MCF 10A (cell line): ENCODE measurements at regions of chr1 and their contacts with region 1.

Region 1: DNA sequence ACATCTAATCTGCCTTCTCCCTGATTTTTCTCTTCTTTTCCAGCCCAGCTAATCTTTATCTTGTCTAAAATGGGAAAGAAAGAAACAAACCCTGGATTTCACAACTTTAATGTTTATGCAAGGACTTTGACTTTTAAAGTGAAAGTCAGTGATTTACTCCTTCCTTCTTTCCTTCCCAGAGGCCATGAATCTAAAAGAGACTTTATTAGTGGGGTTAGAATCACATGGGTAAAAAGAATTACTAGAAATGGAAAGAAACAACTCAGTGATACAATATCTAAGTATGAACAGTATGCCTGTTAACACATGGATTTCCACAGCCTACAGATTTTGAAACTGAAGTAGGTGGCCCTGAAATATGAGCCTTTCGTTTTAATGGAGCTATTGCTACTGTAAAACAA is 59.8 kb upstream of the KCNK2 start:
- DNase-seq: peak; percentile 76
- H3K4me3 Mint-ChIP-seq: peak overlapping the region; percentile 56
- H3K27ac Mint-ChIP-seq: peak overlapping the region; percentile 97
- H3K4me1 Mint-ChIP-seq: peaks cover 40% of the 10 kb centered on the region
- H3K27me3 Mint-ChIP-seq: no peaks in the 10 kb centered on the region
- CTCF ChIP-seq: no peak

Region 2: GRCh38 chr1:214416417-214416816 is 606.3 kb before region 1 on chr1:
- CTCF ChIA-PET with region 1: no interaction called
- POLR2A ChIA-PET with region 1: no interaction called
- intact Hi-C with region 1: no loop called
- DNase-seq: peak; percentile 80
- H3K4me3 Mint-ChIP-seq: no peak overlapping the region
- H3K27ac Mint-ChIP-seq: peak overlapping the region; percentile 69
- H3K4me1 Mint-ChIP-seq: peaks cover 67% of the 10 kb centered on the region
- H3K27me3 Mint-ChIP-seq: no peaks in the 10 kb centered on the region
- CTCF ChIP-seq: no peak

Region 3: DNA sequence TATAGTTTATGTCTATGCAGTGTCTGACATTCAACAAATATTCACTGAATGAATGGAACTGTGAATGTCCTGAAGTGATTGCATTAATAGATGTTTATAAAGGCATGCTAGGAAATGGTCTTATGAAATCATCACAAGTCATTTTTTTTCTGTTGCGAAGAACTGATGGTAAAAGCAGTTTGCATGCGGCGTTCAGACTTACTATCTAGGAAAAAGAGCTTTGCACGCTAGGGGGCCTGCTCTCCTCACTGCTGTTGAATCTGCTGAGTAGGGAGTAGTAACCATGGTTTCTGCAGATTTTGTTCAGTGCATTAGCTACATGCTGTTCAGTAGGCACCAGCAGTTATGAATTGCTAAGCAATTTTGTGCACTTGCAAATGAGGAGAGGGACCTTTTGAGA is 361.9 kb before region 1 on chr1:
- CTCF ChIA-PET with region 1: interaction called, 14 read pairs
- POLR2A ChIA-PET with region 1: interaction called, 3 read pairs
- intact Hi-C with region 1: no loop called
- DNase-seq: peak; percentile 42
- H3K4me3 Mint-ChIP-seq: no peak overlapping the region
- H3K27ac Mint-ChIP-seq: no peak overlapping the region
- H3K4me1 Mint-ChIP-seq: peaks cover 13% of the 10 kb centered on the region
- H3K27me3 Mint-ChIP-seq: no peaks in the 10 kb centered on the region
- CTCF ChIP-seq: peak; percentile 82

Region 4: GRCh38 chr1:214901718-214902117 is 121.0 kb before region 1 on chr1:
- CTCF ChIA-PET with region 1: interaction called, 5 read pairs
- POLR2A ChIA-PET with region 1: interaction called, 25 read pairs
- intact Hi-C with region 1: no loop called
- DNase-seq: peak; percentile 83
- H3K4me3 Mint-ChIP-seq: peak overlapping the region; percentile 13
- H3K27ac Mint-ChIP-seq: peak overlapping the region; percentile 88
- H3K4me1 Mint-ChIP-seq: peaks cover 36% of the 10 kb centered on the region
- H3K27me3 Mint-ChIP-seq: no peaks in the 10 kb centered on the region
- CTCF ChIP-seq: no peak

Region 5: GRCh38 chr1:215001419-215002021 is 21.2 kb before region 1 on chr1:
- CTCF ChIA-PET with region 1: interaction called, 7 read pairs
- POLR2A ChIA-PET with region 1: interaction called, 59 read pairs
- intact Hi-C with region 1: no loop called
- DNase-seq: peak; percentile 79
- H3K4me3 Mint-ChIP-seq: peak overlapping the region; percentile 1
- H3K27ac Mint-ChIP-seq: peak overlapping the region; percentile 87
- H3K4me1 Mint-ChIP-seq: peaks cover 41% of the 10 kb centered on the region
- H3K27me3 Mint-ChIP-seq: no peaks in the 10 kb centered on the region
- CTCF ChIP-seq: no peak

Region 6: GRCh38 chr1:215082532-215083382 is 60.0 kb after region 1 on chr1 and contains the start of gene KCNK2:
- CTCF ChIA-PET with region 1: interaction called, 6 read pairs
- POLR2A ChIA-PET with region 1: interaction called, 26 read pairs
- intact Hi-C with region 1: no loop called
- DNase-seq: peak; percentile 25
- H3K4me3 Mint-ChIP-seq: peak within 1 kb of the TSS; percentile 77
- H3K27ac Mint-ChIP-seq: peak within 1 kb of the TSS; percentile 57
- H3K4me1 Mint-ChIP-seq: peaks cover 21% of the 10 kb centered on the region
- H3K27me3 Mint-ChIP-seq: no peaks in the 10 kb centered on the region
- CTCF ChIP-seq: no peak
- total RNA-seq, gene KCNK2: 2.9 and 5.7 TPM in 2 replicates

Region 7: DNA sequence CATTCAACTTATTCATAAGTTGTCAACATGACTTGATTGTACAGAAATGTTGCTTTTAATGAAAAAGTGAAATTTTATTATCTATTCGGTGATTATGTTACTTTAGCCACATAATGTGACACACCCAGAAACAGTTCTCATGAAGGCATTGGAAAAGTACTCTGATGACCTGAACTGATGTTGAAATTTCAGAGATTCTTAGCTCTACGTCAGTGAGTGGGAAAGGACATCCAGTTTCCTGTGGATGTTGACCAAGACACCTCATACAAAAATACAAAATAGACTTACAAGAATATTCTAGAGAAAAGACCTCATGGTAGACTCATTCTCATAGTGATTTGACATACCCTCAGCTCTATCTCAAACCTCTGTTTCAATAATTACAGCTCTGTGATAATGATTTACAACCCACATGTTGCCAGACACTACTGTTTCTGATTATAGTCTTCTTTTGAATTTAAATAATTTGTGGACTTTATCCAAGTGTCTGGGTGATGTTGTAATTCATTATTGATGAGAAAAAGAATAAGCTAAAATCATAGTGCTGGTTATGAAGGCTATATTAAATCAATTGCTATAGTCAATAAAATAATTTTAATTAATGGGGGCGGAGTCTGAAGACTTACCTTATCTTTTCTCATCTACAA is 97.1 kb after region 1 on chr1:
- CTCF ChIA-PET with region 1: interaction called, 6 read pairs
- POLR2A ChIA-PET with region 1: interaction called, 49 read pairs
- intact Hi-C with region 1: no loop called
- DNase-seq: peak; percentile 88
- H3K4me3 Mint-ChIP-seq: peak overlapping the region; percentile 2
- H3K27ac Mint-ChIP-seq: peak overlapping the region; percentile 97
- H3K4me1 Mint-ChIP-seq: peaks cover 48% of the 10 kb centered on the region
- H3K27me3 Mint-ChIP-seq: no peaks in the 10 kb centered on the region
- CTCF ChIP-seq: no peak

Region 8: GRCh38 chr1:215146341-215146826 is 123.6 kb after region 1 on chr1:
- CTCF ChIA-PET with region 1: interaction called, 36 read pairs
- POLR2A ChIA-PET with region 1: interaction called, 18 read pairs
- intact Hi-C with region 1: no loop called
- DNase-seq: peak; percentile 77
- H3K4me3 Mint-ChIP-seq: no peak overlapping the region
- H3K27ac Mint-ChIP-seq: no peak overlapping the region
- H3K4me1 Mint-ChIP-seq: no peaks in the 10 kb centered on the region
- H3K27me3 Mint-ChIP-seq: no peaks in the 10 kb centered on the region
- CTCF ChIP-seq: peak; percentile 98